GM12878 (cell line): ENCODE measurements at regions of chr4 and their contacts with region 1.

Region 1: DNA sequence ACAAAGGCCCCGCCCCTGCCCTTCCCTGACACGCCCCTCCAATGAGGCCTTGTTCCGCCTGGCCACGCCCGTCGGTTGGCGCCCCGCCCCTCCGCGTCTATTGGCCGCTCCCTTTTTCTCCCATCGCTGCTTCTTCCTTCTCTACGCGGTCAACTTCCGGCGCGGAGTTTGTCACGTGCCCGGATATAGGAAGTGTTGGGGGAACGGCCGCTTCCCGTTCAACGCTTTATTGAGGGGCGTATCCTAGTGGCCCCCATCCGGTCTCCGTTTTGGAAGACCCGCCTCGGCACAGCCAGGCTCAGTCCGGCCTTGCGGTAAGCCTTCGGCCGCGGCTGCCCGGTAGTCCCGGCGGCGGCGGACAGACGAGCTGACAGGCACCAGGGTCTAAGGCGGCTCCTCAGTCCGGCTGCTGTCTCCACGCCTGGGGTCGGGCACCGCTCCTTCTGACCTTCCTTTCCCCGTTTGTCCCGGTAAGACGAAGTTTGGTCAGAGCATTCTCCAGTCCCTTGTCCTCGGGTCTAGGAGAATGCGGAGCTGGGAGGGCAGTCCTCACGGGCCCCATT is at the start of gene EXOC1:
- DNase-seq: peak; percentile 82
- ATAC-seq: peak; percentile 98
- H3K4me3 ChIP-seq: peak within 1 kb of the TSS; percentile 84
- H3K27ac ChIP-seq: peak within 1 kb of the TSS; percentile 85
- H3K4me1 ChIP-seq: no peaks in the 10 kb centered on the region
- H3K27me3 ChIP-seq: no peaks in the 10 kb centered on the region
- CTCF ChIP-seq: no peak
- EP300 ChIP-seq: no peak
- POLR2A ChIP-seq: peak; percentile 89
- RAD21 ChIP-seq: no peak
- polyA plus RNA-seq, gene EXOC1: 11.8 to 13.9 TPM

Region 2: GRCh38 chr4:55395529-55396307 is 457.8 kb before region 1 on chr4 and contains the start of gene TMEM165:
- CTCF ChIA-PET with region 1: no interaction called
- POLR2A ChIA-PET with region 1: no interaction called
- RAD21 ChIA-PET with region 1: no interaction called
- SMC1A ChIA-PET with region 1: no interaction called
- in situ Hi-C with region 1: loop called (anchors 25 kb)
- intact Hi-C with region 1: loop called (anchors 5 kb)
- DNase-seq: peak; percentile 41
- ATAC-seq: peak; percentile 94
- H3K4me3 ChIP-seq: peak within 1 kb of the TSS; percentile 88
- H3K27ac ChIP-seq: peak within 1 kb of the TSS; percentile 91
- H3K4me1 ChIP-seq: peaks cover 3% of the 10 kb centered on the region; the same call in 1 of the 2 replicates
- H3K27me3 ChIP-seq: no peaks in the 10 kb centered on the region
- CTCF ChIP-seq: no peak
- EP300 ChIP-seq: no peak
- POLR2A ChIP-seq: peak; percentile 99
- RAD21 ChIP-seq: no peak
- polyA plus RNA-seq, gene TMEM165: 18.3 to 32.5 TPM

Region 3: GRCh38 chr4:55866973-55867574 is 13.5 kb after region 1 on chr4:
- CTCF ChIA-PET with region 1: interaction called, 20 read pairs
- POLR2A ChIA-PET with region 1: no interaction called
- RAD21 ChIA-PET with region 1: interaction called, 10 read pairs
- SMC1A ChIA-PET with region 1: interaction called, 5 read pairs
- in situ Hi-C with region 1: no loop called
- intact Hi-C with region 1: no loop called
- DNase-seq: peak; percentile 38
- ATAC-seq: peak; percentile 98
- H3K4me3 ChIP-seq: no peak overlapping the region
- H3K27ac ChIP-seq: peak overlapping the region; percentile 31; the same call in 1 of the 2 replicates
- H3K4me1 ChIP-seq: peaks cover 7% of the 10 kb centered on the region; the same call in 1 of the 2 replicates
- H3K27me3 ChIP-seq: no peaks in the 10 kb centered on the region
- CTCF ChIP-seq: peak; percentile 70 to 77 (median 77); a peak in 5 of 6 replicates
- EP300 ChIP-seq: no peak
- POLR2A ChIP-seq: no peak
- RAD21 ChIP-seq: peak; percentile 80

Region 4: DNA sequence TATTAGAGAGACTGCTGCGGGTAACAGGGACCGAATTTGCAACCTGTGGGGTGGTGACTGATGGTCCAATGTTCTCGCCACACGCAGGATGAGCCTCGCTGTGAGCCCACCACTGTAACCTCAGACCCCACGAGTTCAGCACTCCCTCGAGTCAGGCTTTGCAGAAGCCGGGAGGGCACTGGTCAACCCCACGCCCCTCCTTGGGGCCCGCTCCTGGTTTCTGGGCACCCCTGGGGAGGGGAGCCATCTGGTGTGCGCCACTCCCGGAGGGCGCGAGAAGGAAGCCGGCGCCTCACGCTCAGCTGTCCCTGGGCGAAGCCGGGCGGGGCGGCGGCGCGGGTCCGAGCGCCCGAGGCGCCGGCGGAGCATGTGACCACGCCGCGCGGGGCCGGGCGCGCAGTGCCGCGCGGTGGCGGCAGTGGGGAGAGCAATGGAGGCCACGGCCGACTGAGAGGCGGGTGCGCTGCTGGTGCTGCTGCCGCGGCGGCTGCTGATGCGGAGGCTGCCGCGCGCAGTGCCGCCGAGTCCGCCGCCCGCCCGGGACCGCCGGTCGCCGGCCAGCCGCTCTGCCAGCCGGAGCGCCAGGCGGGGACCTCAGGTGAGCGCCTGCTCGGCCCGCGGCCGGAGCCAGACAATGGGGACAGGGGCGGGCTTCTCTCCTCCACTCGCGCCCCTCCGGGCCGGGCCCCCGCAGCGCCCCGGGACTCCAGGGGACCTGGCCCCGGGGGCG is 195.3 kb after region 1 on chr4:
- CTCF ChIA-PET with region 1: no interaction called
- POLR2A ChIA-PET with region 1: interaction called, 12 read pairs
- RAD21 ChIA-PET with region 1: no interaction called
- SMC1A ChIA-PET with region 1: no interaction called
- in situ Hi-C with region 1: no loop called
- intact Hi-C with region 1: no loop called
- DNase-seq: peak; percentile 2
- ATAC-seq: peak; percentile 97
- H3K4me3 ChIP-seq: peak overlapping the region; percentile 84
- H3K27ac ChIP-seq: no peak overlapping the region
- H3K4me1 ChIP-seq: peaks cover 9% of the 10 kb centered on the region; the same call in 1 of the 2 replicates
- H3K27me3 ChIP-seq: peaks cover 0 to 8% of the 10 kb centered on the region in 2 experiments; a peak in 2 of 4 replicates
- CTCF ChIP-seq: peak; percentile 17 to 70 (median 60); a peak in 3 of 6 replicates
- EP300 ChIP-seq: no peak
- POLR2A ChIP-seq: peak; percentile 57; the same call in 1 of the 2 replicates
- RAD21 ChIP-seq: peak; percentile 52